ENCODE measurements at regions of chr17 and their contacts with region 1.

Region 1: DNA sequence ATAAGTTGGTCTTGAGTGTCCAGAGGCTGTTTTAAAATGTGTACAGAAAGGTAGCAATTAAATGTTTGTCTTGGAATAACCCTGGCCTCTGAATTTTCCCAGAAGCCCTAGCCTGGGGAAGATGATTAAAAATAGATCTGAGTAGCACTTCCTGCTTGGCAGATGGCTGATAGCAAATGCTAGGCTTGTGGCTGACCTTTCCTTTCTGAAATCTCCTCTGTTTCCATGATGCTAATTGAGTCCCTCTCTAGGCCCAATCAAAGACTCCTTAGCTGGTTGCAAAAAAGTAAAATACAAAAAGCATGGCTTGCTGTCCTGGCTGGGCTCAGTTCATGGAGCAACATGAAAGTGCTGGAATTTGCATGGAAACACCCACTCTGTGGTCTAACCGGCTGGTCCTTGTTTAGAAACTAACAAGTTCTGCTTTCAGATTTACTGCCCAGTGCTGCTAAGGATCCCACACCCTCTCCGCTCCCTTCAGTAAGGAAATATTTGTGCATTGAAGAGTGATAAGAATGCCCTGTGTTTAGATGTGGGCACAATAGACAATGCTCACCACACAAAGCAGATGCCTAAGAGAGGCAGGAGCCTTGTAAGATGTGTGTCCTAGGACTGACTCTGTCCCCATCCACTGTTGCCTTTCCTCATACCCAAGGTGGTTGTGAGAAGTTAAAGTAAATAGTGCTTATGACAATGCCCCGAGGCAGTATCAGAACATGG is 40.8 kb downstream of the YPEL2 start:
- DNase-seq: no peak
- ATAC-seq: peak; percentile 64

Region 2: DNA sequence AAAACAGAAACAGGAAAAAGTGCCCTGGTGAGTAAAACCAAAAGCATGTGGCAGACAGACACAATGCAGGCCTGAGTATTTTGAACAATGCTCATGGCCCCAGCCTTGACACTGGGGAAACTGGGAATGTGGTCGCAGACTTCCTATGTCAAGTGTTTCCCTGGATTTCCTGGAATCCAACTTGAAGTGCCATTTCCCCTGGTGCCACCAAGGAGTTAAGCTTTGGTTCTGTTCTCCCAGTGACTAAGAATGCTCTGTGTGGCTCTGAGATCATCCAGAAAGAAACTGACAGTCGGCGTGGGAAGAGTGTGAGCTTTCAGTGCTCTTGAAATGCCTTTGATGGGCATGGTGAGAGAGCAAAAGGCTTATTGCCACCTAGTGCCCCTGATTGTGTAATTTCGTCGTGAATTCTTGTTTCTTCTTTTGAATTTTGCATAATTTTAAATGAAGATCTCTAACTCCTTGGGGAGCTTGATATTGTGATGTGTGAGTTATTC is 55.2 kb after region 1 on chr17:
- intact Hi-C with region 1: loop called (anchors 5 kb)
- DNase-seq: no peak
- ATAC-seq: peak; percentile 42